AG04450 (cell line): ENCODE measurements at regions of chr17 and their contacts with region 1.

Region 1: GRCh38 chr17:46193626-46194392 is 580 bp upstream of the KANSL1 start:
- DNase-seq: peak; percentile 70
- H3K4me3 ChIP-seq: peak overlapping the region; percentile 81
- H3K27ac ChIP-seq: peak overlapping the region; percentile 87
- H3K27me3 ChIP-seq: no peaks in the 10 kb centered on the region
- CTCF ChIP-seq: no peak; the same call in 1 of the 2 replicates

Region 2: GRCh38 chr17:45573924-45574770 is 619.7 kb before region 1 on chr17:
- CTCF ChIA-PET with region 1: no interaction called
- POLR2A ChIA-PET with region 1: no interaction called
- DNase-seq: peak; percentile 56
- H3K4me3 ChIP-seq: no peak overlapping the region
- H3K27ac ChIP-seq: no peak overlapping the region
- H3K27me3 ChIP-seq: no peaks in the 10 kb centered on the region
- CTCF ChIP-seq: no peak

Region 3: DNA sequence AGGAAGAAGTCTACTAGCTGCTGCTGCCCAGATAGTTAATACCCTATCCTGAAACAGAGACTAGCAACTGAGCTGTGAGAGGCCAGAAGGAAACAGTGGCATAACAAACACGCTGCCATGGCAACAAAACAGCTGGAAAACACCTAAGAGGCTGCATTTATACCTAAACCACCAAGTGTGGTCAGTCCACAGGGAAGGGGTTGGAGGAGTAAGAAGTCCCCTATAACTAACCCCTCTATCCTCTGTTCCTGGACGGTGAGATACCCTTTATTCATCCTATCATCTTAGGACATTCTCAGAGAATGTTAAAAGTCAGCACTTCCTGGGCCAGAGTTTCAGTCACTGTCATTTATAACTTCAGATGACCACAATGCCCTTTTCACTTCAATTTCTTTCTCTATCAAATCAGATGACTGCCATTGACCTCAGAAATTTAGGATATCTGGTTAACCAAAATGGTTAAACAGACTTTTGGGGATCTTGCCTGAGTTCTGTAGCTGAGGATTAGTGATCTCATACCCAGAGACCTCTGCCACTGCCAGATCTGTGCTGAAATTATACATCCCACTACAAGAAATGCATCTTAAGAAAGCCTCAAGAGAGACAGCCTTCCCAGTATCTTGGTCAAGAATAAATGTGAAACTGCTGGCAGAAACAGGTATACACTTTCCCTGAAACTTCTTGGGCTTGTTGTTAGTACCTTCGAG is 158.5 kb before region 1 on chr17:
- CTCF ChIA-PET with region 1: interaction called, 33 read pairs
- POLR2A ChIA-PET with region 1: no interaction called
- DNase-seq: no peak
- H3K4me3 ChIP-seq: no peak overlapping the region
- H3K27ac ChIP-seq: no peak overlapping the region
- H3K27me3 ChIP-seq: no peaks in the 10 kb centered on the region
- CTCF ChIP-seq: no peak

Region 4: DNA sequence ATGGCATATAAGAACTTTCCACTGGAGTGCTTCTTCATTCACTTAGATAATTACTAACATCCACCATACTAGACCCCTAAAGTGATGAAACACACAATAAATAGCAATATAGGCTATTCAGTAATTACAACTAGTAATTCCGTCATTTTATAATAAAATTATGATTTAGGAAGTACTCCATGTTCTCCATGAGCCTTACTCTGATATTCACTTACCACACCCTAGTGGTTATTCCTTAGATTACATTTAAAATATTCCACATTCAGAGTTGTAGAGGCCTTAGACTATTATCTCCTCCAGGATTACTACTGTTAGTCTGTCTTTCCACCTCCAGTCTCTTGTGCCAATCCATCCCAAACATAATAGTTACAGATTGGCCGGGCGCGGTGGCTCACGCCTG is 132.4 kb before region 1 on chr17:
- CTCF ChIA-PET with region 1: interaction called, 27 read pairs
- POLR2A ChIA-PET with region 1: no interaction called
- DNase-seq: no peak
- H3K4me3 ChIP-seq: no peak overlapping the region
- H3K27ac ChIP-seq: no peak overlapping the region
- H3K27me3 ChIP-seq: no peaks in the 10 kb centered on the region
- CTCF ChIP-seq: peak; percentile 23; the same call in 1 of the 2 replicates

Region 5: GRCh38 chr17:46078675-46079074 is 115.1 kb before region 1 on chr17:
- CTCF ChIA-PET with region 1: interaction called, 12 read pairs
- POLR2A ChIA-PET with region 1: no interaction called
- DNase-seq: no peak
- H3K4me3 ChIP-seq: no peak overlapping the region
- H3K27ac ChIP-seq: no peak overlapping the region
- H3K27me3 ChIP-seq: no peaks in the 10 kb centered on the region
- CTCF ChIP-seq: no peak

Region 6: DNA sequence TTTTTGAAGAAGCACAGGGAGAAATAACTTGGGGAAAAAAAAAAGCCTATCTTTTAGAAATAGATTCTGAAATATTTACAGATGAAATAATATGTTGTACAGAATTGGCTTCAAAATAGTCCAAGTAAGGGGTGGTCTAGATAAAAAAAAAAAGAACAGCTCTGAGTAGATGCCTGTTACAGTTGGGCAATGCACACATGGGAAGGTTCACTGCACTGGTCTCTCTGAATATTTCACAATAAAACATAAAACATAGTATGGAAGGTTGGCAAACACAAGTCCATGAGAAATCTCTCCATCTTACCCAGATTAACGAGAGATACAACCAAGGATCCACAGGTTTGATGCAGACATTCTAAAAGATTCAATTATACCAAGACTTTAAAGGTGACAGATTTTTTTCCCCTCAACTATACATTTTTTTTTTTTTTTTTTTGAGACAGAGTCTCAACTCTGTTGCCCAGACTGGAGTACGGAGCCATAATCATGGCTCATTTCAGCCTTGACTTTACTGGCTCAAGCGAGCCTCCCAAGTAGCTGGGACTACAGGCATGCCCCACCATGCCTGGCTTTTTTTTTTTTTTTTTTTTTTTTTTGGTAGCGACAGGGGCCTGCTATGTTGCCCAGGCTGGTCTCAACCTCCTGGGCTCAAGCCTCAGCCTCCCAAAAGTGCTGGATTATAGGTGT is 58.5 kb before region 1 on chr17:
- CTCF ChIA-PET with region 1: interaction called, 5 read pairs
- POLR2A ChIA-PET with region 1: interaction called, 17 read pairs
- DNase-seq: no peak
- H3K4me3 ChIP-seq: no peak overlapping the region
- H3K27ac ChIP-seq: no peak overlapping the region
- H3K27me3 ChIP-seq: no peaks in the 10 kb centered on the region
- CTCF ChIP-seq: no peak

Region 7: DNA sequence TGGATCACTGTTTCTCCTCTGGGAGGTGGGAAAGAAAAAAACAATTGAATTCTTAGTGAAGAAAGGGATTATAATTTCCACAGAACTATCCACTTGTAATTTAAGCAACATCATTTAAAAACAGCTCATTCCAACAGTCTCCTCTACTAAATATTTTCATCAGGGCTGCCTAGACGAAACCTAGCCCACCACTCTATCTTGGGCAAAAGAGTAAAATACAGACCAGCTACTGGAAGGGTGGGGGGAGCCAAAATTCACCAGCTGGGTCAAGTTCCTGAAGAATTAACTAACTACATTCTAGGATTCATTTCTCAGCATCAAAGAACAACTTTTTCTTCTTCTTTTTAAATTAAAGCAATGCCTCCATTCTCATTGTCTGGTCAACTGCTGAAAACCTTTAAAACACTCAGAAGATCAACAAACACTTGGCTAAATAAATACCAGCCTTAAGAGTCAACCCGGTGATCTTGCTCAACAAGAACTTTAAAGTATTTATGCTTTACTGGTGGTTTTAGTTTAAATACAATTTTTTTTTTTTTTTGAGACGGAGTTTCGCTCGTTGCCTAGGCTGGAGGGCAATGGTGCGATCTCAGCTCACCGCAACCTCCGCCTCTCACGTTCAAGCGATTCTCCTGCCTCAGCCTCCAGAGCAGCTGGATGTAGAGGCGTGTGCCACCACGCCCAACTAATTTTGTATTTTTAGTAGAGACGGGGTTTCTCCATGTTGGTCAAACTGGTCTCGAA is 25.8 kb before region 1 on chr17:
- CTCF ChIA-PET with region 1: interaction called, 19 read pairs
- POLR2A ChIA-PET with region 1: no interaction called
- DNase-seq: peak; percentile 67
- H3K4me3 ChIP-seq: no peak overlapping the region
- H3K27ac ChIP-seq: peak overlapping the region; percentile 67
- H3K27me3 ChIP-seq: no peaks in the 10 kb centered on the region
- CTCF ChIP-seq: no peak

Region 8: GRCh38 chr17:46212634-46213435 is 19.0 kb after region 1 on chr17:
- CTCF ChIA-PET with region 1: interaction called, 46 read pairs
- POLR2A ChIA-PET with region 1: no interaction called
- DNase-seq: peak; percentile 54
- H3K4me3 ChIP-seq: no peak overlapping the region
- H3K27ac ChIP-seq: no peak overlapping the region
- H3K27me3 ChIP-seq: no peaks in the 10 kb centered on the region
- CTCF ChIP-seq: peak; percentile 78